ENCODE measurements at regions of chr22 and their contacts with region 1.

Region 1: DNA sequence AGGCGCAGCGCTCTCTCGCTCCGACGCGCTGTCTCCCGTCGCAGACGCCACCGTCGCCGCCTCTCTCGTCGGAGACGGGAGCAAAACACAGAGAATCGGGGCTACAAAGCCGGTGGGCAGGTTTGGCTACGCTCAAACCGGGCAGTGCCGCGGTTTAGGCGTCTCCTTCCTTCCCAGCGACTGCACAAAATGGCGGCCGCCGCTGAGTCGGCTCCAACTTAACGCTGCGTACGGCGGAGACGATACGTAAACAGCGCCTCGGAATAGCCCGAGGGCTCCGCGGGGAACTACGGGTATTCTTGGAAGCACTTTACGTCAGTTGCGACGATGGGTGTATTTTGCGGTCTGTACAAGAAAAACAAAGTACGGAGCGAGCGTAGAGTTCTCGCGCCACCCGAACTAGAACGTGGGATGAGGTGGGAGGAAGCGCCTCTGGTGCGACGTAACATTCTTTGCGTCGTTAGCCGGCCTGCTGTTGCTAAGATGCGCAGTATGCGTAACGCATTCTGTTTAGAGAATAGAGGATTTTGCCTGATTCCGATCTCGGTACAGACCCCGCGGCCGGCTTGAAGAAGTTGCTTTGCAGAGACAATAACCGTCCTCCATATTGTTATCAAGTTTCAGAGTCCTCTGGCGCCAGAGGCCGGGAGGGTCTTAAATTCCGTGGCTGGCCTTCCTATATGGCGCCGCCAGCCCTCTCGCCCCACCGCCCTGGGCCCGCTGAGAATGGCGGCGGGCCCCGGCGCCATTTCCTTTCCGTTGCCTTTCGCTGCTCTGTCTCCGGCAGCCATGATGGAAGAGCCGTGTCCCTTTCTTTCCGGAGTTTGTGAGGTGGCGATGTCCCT is at the start of gene DDX17:
- H3K4me3 Mint-ChIP-seq: peak within 1 kb of the TSS; percentile 100
- H3K27ac Mint-ChIP-seq: peak within 1 kb of the TSS; percentile 100
- H3K4me1 Mint-ChIP-seq: peaks cover 36% of the 10 kb centered on the region
- H3K27me3 Mint-ChIP-seq: peaks cover 30% of the 10 kb centered on the region

Region 2: GRCh38 chr22:38353142-38353629 is 153.2 kb before region 1 on chr22:
- intact Hi-C with region 1: no loop called
- H3K4me3 Mint-ChIP-seq: no peak overlapping the region
- H3K27ac Mint-ChIP-seq: no peak overlapping the region
- H3K4me1 Mint-ChIP-seq: peaks cover 5% of the 10 kb centered on the region
- H3K27me3 Mint-ChIP-seq: peaks cover 37% of the 10 kb centered on the region

Region 3: DNA sequence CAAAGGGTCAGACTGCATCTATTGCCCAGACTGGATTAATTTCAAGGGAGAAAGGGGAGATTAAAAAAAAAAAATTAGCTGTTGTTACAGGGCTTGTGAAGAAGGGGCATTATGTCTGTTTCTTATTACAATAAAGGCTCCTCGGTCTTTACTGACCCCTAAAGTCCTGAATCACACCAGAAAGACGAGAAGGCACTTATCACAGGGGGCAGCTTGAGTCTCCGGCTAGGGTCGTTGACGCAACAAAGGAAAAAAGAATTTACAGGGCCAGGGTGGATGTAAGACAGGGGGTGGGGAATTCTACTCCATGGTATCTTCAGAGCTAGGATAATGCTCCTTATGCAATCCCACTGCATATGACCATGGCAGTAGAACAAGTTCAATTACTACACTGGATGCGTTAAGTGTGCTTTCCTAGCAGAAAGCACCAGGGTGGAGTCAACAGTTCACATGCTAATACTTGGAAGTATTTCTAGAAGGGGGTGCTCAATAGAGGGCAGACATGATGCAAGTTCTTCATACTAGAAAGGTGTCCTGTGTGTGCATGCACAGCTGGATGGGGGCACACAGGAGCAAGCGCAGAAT is 16.7 kb before region 1 on chr22:
- intact Hi-C with region 1: loop called (anchors 2 kb)
- H3K4me3 Mint-ChIP-seq: no peak overlapping the region
- H3K27ac Mint-ChIP-seq: no peak overlapping the region
- H3K4me1 Mint-ChIP-seq: no peaks in the 10 kb centered on the region
- H3K27me3 Mint-ChIP-seq: no peaks in the 10 kb centered on the region

Region 4: DNA sequence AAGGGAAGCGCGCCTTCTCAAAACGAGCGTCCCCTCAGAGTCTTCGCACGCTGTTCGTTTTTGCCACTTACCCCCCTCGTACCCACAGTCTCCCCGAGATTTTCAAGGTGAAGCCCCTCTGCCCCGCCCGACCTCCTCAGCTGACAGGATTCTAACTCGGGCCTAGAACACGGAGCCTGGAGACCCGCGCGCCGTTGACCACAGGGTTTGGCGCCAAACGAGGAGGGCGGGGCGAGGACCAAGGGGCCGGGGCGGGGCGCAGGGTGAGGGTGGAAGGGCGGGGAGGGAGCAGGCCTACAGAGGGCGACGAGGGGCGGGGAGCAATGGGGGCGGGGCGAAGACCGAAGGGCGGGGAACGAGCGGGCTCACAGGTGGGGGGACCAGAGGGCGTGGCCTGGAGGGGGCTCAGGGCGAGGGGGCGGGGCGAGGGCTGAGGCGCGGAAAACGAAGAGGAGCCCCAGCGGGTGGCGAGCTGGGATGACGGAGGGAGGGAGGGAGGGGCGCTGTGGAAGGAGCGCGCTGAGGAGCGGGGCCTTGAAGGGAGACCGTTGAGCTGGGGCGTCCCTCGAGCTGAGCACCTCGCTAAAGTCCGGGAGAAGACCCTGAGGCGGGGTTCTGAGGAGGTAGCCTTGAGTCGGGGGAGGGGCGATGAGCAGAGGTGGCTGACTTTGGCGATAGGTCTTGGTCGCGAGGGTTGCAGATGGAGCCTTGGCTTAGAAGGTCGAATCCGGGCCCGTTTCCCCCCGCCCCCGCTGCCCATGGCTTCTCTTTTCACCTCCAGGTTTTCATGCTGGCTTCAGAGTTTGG is 63.8 kb after region 1 on chr22 and contains the start of gene DMC1:
- intact Hi-C with region 1: loop called (anchors 5 kb)
- H3K4me3 Mint-ChIP-seq: peak within 1 kb of the TSS; percentile 55
- H3K27ac Mint-ChIP-seq: no peak within 1 kb of the TSS
- H3K4me1 Mint-ChIP-seq: peaks cover 25% of the 10 kb centered on the region
- H3K27me3 Mint-ChIP-seq: peaks cover 92% of the 10 kb centered on the region

Region 5: DNA sequence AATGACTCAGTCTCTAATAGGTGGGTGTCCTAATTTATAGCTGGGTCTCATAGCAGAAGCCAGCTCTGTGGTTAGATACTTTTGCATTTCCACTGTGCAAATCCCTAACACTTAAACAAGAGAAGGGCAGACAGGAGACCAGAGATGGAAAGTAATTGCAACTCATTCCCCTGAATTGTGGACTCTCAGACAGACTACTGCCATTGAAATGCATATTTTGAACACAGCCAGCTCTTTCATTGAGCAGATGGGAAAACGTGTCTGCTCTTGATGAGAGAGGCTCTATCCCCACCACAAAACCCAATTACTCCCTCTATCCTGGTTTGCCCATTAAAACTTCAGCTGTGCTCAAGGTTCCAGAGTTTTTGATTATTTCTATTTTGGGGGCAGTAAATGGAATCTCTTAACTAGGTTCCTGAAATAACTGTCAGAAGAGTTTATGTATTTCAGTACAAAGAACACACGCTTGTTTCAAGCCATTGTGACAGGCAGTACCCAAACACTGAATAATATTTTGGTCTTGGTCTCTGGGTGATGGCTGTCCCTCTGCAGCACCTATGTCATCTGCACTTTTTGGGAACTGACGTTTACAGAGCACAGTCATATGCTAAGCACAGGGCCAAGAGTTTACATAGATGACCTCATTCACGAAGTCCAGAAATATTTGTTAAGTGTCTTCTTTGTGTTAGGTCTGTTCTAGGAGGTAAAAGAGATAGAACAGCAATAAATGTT is 108.2 kb after region 1 on chr22:
- intact Hi-C with region 1: no loop called
- H3K4me3 Mint-ChIP-seq: no peak overlapping the region
- H3K27ac Mint-ChIP-seq: no peak overlapping the region
- H3K4me1 Mint-ChIP-seq: no peaks in the 10 kb centered on the region
- H3K27me3 Mint-ChIP-seq: peaks cover 21% of the 10 kb centered on the region

Region 6: DNA sequence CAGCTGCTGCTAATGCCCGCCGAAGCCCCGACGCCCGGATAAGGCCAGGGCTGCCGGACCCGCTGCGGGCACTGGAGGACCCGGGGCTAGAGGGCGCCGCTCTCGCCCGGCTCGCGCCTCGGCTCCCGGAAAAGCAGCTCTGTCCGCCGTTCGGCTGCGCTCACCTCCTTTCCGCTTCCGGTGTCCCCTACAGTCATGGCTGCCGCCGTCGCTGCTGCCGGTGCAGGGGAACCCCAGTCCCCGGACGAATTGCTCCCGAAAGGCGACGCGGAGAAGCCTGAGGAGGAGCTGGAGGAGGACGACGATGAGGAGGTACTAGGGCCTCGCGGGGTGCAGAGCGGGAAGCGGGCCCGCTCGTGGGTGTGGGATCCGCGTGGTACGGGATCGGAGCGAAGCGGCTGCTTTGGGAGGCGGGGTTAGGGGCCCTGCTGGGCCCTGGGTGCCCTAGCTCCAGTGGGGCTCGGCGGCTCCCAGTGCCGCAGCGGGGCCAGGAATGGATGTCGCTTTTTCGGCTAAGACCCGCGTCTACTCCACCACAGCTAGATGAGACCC is 175.5 kb after region 1 on chr22 and contains the start of gene TOMM22:
- intact Hi-C with region 1: loop called (anchors 10 kb)
- H3K4me3 Mint-ChIP-seq: peak within 1 kb of the TSS; percentile 93
- H3K27ac Mint-ChIP-seq: peak within 1 kb of the TSS; percentile 89
- H3K4me1 Mint-ChIP-seq: peaks cover 22% of the 10 kb centered on the region
- H3K27me3 Mint-ChIP-seq: peaks cover 10% of the 10 kb centered on the region

Region 7: GRCh38 chr22:38700789-38701628 is 194.7 kb after region 1 on chr22 and contains the start of gene JOSD1:
- intact Hi-C with region 1: no loop called
- H3K4me3 Mint-ChIP-seq: peak within 1 kb of the TSS; percentile 77
- H3K27ac Mint-ChIP-seq: peak within 1 kb of the TSS; percentile 90
- H3K4me1 Mint-ChIP-seq: peaks cover 51% of the 10 kb centered on the region
- H3K27me3 Mint-ChIP-seq: no peaks in the 10 kb centered on the region